ENCODE measurements at regions of chr7 and their contacts with region 1.

Region 1: DNA sequence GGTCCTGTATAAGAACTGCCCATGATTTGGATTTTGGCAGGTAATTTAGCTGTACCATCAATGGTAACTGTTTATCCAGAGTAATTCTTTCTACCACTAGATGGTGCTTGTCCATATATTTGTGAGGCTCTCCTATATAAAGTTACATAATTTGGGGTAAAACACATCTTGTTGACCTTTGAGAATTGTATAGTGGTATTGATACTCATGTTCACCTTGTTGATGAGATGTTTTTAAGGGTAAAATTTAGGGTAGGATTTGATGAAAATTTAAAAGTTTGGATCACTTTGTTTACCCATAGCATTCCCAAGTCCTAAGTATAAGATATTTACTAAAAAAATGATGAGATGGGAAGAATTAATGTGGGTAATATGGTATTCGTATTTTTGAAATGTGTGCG is 31.6 kb downstream of the ST7 start:
- DNase-seq: peak; percentile 45
- H3K4me3 ChIP-seq: no peak overlapping the region
- H3K27ac ChIP-seq: no peak overlapping the region
- H3K4me1 ChIP-seq: no peaks in the 10 kb centered on the region
- H3K27me3 ChIP-seq: no peaks in the 10 kb centered on the region
- CTCF ChIP-seq: peak; percentile 29 to 44
- POLR2A ChIP-seq: no peak

Region 2: GRCh38 chr7:116940689-116941088 is 44.2 kb before region 1 on chr7:
- CTCF ChIA-PET with region 1: interaction called, 11 read pairs
- POLR2A ChIA-PET with region 1: interaction called, 3 read pairs
- dilution Hi-C with region 1: no loop called
- intact Hi-C with region 1: no loop called
- DNase-seq: no peak
- H3K4me3 ChIP-seq: no peak overlapping the region
- H3K27ac ChIP-seq: no peak overlapping the region
- H3K4me1 ChIP-seq: no peaks in the 10 kb centered on the region
- H3K27me3 ChIP-seq: peaks cover 1 to 4% of the 10 kb centered on the region in 2 experiments
- CTCF ChIP-seq: no peak
- POLR2A ChIP-seq: no peak

Region 3: GRCh38 chr7:116999311-116999710 is 14.4 kb after region 1 on chr7:
- CTCF ChIA-PET with region 1: interaction called, 33 read pairs
- POLR2A ChIA-PET with region 1: no interaction called
- dilution Hi-C with region 1: no loop called
- intact Hi-C with region 1: no loop called
- DNase-seq: no peak
- H3K4me3 ChIP-seq: no peak overlapping the region
- H3K27ac ChIP-seq: no peak overlapping the region
- H3K4me1 ChIP-seq: no peaks in the 10 kb centered on the region
- H3K27me3 ChIP-seq: no peaks in the 10 kb centered on the region
- CTCF ChIP-seq: no peak
- POLR2A ChIP-seq: no peak

Region 4: GRCh38 chr7:117072620-117073118 is 87.8 kb after region 1 on chr7:
- CTCF ChIA-PET with region 1: interaction called, 14 read pairs
- POLR2A ChIA-PET with region 1: no interaction called
- dilution Hi-C with region 1: no loop called
- intact Hi-C with region 1: no loop called
- DNase-seq: peak; percentile 89
- H3K4me3 ChIP-seq: peak overlapping the region in 1 of 3 experiments; percentile 16
- H3K27ac ChIP-seq: peak overlapping the region; percentile 34
- H3K4me1 ChIP-seq: peaks cover 18% of the 10 kb centered on the region
- H3K27me3 ChIP-seq: no peaks in the 10 kb centered on the region
- CTCF ChIP-seq: no peak
- POLR2A ChIP-seq: no peak

Region 5: DNA sequence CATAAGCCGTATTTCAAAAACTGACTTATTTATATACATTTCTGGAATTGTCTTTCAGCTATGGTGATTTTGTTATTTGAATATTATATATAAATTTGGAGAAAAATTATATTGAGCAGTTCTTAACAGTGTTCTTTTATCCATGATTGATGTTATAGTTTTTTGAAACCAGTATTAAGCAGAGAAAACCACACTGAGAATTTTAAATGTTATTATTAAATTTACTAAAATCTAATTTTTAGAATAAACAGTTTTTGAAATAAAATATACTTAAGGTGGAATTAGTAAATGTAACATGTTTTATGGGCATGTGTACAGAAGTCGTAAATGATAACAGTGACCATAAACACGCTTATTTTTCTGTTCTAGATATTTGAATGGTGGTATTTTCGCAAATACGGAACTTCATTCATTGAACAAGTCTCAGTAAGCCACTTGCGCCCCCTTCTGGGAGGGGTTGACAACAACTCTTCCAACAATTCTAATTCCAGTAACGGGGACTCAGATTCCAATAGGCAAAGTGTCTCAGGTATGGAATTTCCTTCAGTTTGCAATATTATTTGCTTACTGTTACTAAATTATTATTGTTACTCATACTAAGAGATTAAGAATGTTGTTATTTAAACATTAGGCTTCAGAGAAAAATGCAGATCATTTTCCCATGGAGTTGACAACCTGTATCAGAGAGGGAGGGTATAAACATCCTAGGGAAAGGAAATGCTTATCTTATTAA is 134.4 kb after region 1 on chr7:
- CTCF ChIA-PET with region 1: interaction called, 700 read pairs
- POLR2A ChIA-PET with region 1: interaction called, 5 read pairs
- dilution Hi-C with region 1: no loop called
- intact Hi-C with region 1: loop called (anchors 1 kb)
- DNase-seq: peak; percentile 84
- H3K4me3 ChIP-seq: peak overlapping the region in 1 of 3 experiments; percentile 28
- H3K27ac ChIP-seq: no peak overlapping the region
- H3K4me1 ChIP-seq: peaks cover 16% of the 10 kb centered on the region
- H3K27me3 ChIP-seq: no peaks in the 10 kb centered on the region
- CTCF ChIP-seq: peak; percentile 74 to 79
- POLR2A ChIP-seq: no peak

Region 6: GRCh38 chr7:117737926-117738325 is 753.0 kb after region 1 on chr7:
- CTCF ChIA-PET with region 1: no interaction called
- POLR2A ChIA-PET with region 1: no interaction called
- dilution Hi-C with region 1: no loop called
- intact Hi-C with region 1: no loop called
- DNase-seq: no peak
- H3K4me3 ChIP-seq: no peak overlapping the region
- H3K27ac ChIP-seq: no peak overlapping the region
- H3K4me1 ChIP-seq: no peaks in the 10 kb centered on the region
- H3K27me3 ChIP-seq: no peaks in the 10 kb centered on the region
- CTCF ChIP-seq: no peak
- POLR2A ChIP-seq: no peak